AG04450 (cell line): ENCODE measurements at regions of chr22 and their contacts with region 1.

Region 1: GRCh38 chr22:19679522-19680101 is 34.7 kb upstream of the SEPTIN5 start:
- DNase-seq: no peak
- H3K4me3 ChIP-seq: no peak overlapping the region
- H3K27ac ChIP-seq: no peak overlapping the region
- H3K27me3 ChIP-seq: peaks cover 14% of the 10 kb centered on the region
- CTCF ChIP-seq: peak; percentile 69

Region 2: DNA sequence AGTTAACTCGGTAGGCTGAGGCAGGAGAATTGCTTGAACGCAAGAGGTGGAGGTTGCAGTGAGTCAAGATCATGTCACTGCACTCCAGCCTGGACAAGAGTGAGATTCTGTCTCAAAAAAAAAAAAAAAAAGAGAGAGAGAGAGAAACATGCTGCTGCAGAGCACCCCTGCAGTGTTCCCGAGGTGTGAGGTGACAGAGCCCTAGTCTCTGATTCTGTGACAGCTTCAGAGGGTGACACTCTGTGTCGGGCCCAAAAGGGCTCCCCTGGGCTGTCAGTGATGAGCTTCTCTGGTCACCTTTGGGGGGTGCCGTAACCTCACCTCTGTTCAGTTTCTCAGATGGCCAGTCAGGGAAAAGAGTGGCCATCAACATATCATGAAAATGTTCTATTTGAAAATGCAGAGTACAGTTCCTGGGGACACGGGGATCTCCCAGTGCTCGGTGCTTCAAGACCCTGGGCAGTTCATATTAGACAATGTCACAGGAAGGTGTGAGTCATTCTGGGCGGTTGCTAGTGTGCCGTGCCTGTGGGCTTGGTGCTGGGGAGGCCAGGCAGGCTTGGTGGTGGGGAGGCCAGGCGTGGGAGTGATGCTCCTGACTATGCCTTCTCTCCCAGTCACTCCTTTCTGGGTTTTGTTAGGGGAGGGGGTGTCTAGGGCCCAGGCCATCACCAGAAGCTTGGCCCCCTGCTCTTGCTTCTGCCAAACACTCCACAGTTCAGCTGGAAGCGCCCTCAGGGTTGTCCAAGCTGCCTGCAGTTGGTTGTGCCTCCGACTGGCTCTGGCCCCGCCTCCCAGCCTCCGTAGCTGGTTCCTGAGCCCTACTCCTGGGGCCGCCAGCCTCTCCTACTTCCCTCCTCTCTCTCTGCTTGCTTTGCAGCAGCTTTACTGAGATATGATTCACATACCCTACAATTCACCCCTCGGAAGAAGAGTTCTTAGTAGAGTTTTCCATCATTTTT is 102.9 kb before region 1 on chr22:
- CTCF ChIA-PET with region 1: no interaction called
- POLR2A ChIA-PET with region 1: interaction called, 13 read pairs
- DNase-seq: no peak
- H3K4me3 ChIP-seq: no peak overlapping the region
- H3K27ac ChIP-seq: peak overlapping the region; percentile 57
- H3K27me3 ChIP-seq: peaks cover 4% of the 10 kb centered on the region
- CTCF ChIP-seq: no peak

Region 3: DNA sequence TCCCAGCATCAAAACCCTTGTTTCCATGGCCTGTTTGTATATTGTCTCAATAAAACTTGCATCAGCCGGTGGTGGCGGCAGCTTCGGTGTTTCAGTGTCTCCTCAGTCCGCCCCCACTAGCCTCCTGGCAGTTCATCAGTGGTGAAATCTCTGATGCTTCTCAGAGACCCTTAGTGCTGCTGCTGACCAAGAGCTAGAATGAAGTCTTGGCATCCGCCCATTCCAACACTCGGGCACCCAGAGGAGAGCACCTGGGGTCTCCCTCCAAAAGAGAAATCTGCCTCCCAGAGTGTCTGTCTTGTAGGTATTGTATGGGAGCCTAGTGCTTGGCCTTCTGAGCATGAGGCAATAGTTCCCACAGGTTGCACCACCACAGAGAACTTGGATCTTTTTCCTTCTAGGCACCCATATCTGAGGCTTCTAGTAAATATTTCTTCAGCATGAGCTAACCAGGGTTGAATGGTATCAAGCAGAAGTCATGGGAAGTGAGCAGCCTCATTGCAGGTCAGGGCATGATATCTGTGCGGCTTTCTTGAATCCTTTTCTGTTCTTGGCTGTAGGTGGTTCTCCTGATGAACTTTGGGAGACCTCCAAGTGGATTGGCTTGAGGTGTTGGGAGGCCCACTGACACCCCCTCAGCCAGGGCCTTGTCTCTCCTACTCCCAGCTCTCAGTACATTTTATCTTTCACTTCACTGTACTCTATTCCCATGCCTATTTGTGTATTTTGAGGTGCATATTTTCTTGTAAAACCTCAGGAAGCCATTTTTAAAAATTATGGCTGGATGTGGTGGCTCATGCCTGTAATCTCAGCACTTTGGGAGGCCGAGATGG is 1274.3 kb after region 1 on chr22:
- CTCF ChIA-PET with region 1: no interaction called
- POLR2A ChIA-PET with region 1: no interaction called
- DNase-seq: no peak
- H3K4me3 ChIP-seq: no peak overlapping the region
- H3K27ac ChIP-seq: no peak overlapping the region
- H3K27me3 ChIP-seq: no peaks in the 10 kb centered on the region
- CTCF ChIP-seq: no peak